ENCODE measurements at regions of chrX and their contacts with region 1.

Region 1: GRCh38 chrX:101427954-101428353 is 19.9 kb downstream of the HNRNPH2 start:
- DNase-seq: no peak
- H3K4me3 ChIP-seq: no peak overlapping the region
- H3K27ac ChIP-seq: no peak overlapping the region
- H3K4me1 ChIP-seq: no peaks in the 10 kb centered on the region
- H3K27me3 ChIP-seq: no peaks in the 10 kb centered on the region
- CTCF ChIP-seq: no peak
- EP300 ChIP-seq: no peak
- RAD21 ChIP-seq: no peak

Region 2: DNA sequence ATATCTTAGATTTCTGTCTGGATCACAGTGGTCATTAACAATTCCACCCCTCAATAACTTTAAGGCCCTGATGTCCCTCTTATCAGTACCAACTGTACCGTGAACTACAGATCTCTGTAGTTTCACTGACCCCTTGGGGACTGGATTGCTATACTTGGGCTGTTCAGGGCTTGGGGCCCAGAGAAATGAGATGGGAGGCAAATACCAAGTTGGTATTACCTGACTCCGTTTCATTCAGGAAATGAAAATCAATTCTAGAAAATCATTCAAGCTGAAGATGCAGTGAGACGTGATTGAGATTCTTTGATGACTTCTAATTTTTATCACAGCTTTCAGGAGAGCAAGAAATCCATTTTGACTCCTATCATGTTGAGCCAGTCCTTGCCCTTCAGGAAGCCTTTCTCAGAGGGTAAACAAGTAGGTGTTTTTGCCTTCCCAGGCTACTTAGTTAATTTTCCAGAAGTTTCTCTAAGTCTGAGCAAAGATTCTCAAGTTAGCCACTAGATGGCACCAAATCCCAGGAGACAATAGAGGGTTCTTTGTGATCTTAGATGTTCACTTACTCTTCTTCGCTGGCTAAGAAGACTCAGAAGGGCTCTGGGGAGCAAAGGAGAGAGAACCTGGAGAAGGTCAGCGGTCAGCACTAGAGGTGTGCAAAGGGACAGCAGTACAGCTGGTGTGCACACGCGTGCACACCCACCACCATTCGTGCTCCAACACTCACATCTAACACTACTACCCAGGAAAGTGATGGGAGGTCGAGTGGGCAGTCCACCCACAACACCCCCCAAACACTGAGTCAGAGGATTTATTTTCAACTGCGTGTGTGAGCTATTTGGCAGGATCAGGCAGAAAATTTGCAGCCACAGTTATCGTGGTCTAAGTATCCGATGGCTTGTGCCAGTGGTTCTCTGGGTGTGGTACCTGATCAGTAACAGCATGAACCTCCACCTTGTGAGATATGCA is 12.5 kb before region 1 on chrX:
- CTCF ChIA-PET with region 1: interaction called, 24 read pairs
- POLR2A ChIA-PET with region 1: no interaction called
- DNase-seq: peak; percentile 58
- H3K4me3 ChIP-seq: no peak overlapping the region
- H3K27ac ChIP-seq: peak overlapping the region; percentile 25 to 47; a peak in 3 of 4 replicates
- H3K4me1 ChIP-seq: peaks cover 0 to 6% of the 10 kb centered on the region in 2 experiments; a peak in 2 of 4 replicates
- H3K27me3 ChIP-seq: no peaks in the 10 kb centered on the region
- CTCF ChIP-seq: peak; percentile 84
- EP300 ChIP-seq: no peak
- RAD21 ChIP-seq: peak; percentile 83

Region 3: GRCh38 chrX:101442085-101442484 is 14.1 kb after region 1 on chrX:
- CTCF ChIA-PET with region 1: no interaction called
- POLR2A ChIA-PET with region 1: no interaction called
- DNase-seq: no peak
- H3K4me3 ChIP-seq: no peak overlapping the region
- H3K27ac ChIP-seq: no peak overlapping the region
- H3K4me1 ChIP-seq: no peaks in the 10 kb centered on the region
- H3K27me3 ChIP-seq: no peaks in the 10 kb centered on the region
- CTCF ChIP-seq: no peak
- EP300 ChIP-seq: no peak
- RAD21 ChIP-seq: no peak

Measured in SK-N-SH (cell line).